CD8-positive, alpha-beta T cell (primary cell): ENCODE measurements at regions of chr1 and their contacts with region 1.

Region 1: GRCh38 chr1:113811888-113812660 is at the start of gene RSBN1:
- DNase-seq: peak; percentile 96 to 99 (median 98)
- ATAC-seq: peak; percentile 91
- H3K4me3 ChIP-seq: peak within 1 kb of the TSS; percentile 89 to 98
- H3K4me3 Mint-ChIP-seq: peak within 1 kb of the TSS; percentile 93
- H3K27ac ChIP-seq: peak within 1 kb of the TSS; percentile 90 to 94
- H3K27ac Mint-ChIP-seq: peak within 1 kb of the TSS; percentile 98
- H3K4me1 ChIP-seq: peaks cover 24% of the 10 kb centered on the region
- H3K4me1 Mint-ChIP-seq: peaks cover 37% of the 10 kb centered on the region
- H3K27me3 ChIP-seq: no peaks in the 10 kb centered on the region
- H3K27me3 Mint-ChIP-seq: no peaks in the 10 kb centered on the region
- CTCF ChIP-seq: no peak
- total RNA-seq, gene RSBN1: 36.8 to 37.6 TPM

Region 2: GRCh38 chr1:112955781-112956543 is 856.1 kb before region 1 on chr1 and contains the start of gene SLC16A1:
- CTCF ChIA-PET with region 1: no interaction called
- POLR2A ChIA-PET with region 1: no interaction called
- intact Hi-C with region 1: loop called in 1 of 2 experiments (anchors 10 kb)
- DNase-seq: peak; percentile 68 to 92 (median 86)
- ATAC-seq: peak; percentile 78
- H3K4me3 ChIP-seq: peak within 1 kb of the TSS; percentile 97 to 98
- H3K4me3 Mint-ChIP-seq: peak within 1 kb of the TSS; percentile 98
- H3K27ac ChIP-seq: peak within 1 kb of the TSS; percentile 79 to 87
- H3K27ac Mint-ChIP-seq: peak within 1 kb of the TSS; percentile 90
- H3K4me1 ChIP-seq: peaks cover 25% of the 10 kb centered on the region
- H3K4me1 Mint-ChIP-seq: peaks cover 63% of the 10 kb centered on the region
- H3K27me3 ChIP-seq: no peaks in the 10 kb centered on the region
- H3K27me3 Mint-ChIP-seq: no peaks in the 10 kb centered on the region
- CTCF ChIP-seq: no peak
- total RNA-seq, gene SLC16A1: 34.0 to 34.1 TPM

Region 3: DNA sequence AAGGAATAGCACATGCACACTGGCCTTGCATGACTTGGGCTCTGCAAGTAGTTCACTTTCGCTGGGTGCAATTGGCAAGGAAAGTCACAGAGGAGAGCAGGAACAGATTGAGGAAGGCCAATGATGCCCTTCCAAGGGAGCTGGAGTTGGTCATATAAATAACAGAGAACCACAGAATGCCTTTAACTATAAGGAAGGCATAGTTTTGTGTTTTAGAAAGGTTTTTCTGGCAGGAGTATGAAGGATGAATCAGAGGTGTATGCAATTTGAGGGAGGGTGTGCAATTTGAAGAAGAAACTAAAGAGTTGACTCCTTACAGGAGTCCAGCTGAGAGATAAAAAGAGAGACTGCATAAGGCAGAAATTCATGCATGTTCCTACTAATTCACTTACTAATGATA is 164.9 kb before region 1 on chr1:
- CTCF ChIA-PET with region 1: no interaction called
- POLR2A ChIA-PET with region 1: no interaction called
- intact Hi-C with region 1: no loop called
- DNase-seq: no peak
- ATAC-seq: no peak
- H3K4me3 ChIP-seq: no peak overlapping the region
- H3K4me3 Mint-ChIP-seq: no peak overlapping the region
- H3K27ac ChIP-seq: no peak overlapping the region
- H3K27ac Mint-ChIP-seq: no peak overlapping the region
- H3K4me1 ChIP-seq: no peaks in the 10 kb centered on the region
- H3K4me1 Mint-ChIP-seq: no peaks in the 10 kb centered on the region
- H3K27me3 ChIP-seq: no peaks in the 10 kb centered on the region
- H3K27me3 Mint-ChIP-seq: no peaks in the 10 kb centered on the region
- CTCF ChIP-seq: no peak

Region 4: DNA sequence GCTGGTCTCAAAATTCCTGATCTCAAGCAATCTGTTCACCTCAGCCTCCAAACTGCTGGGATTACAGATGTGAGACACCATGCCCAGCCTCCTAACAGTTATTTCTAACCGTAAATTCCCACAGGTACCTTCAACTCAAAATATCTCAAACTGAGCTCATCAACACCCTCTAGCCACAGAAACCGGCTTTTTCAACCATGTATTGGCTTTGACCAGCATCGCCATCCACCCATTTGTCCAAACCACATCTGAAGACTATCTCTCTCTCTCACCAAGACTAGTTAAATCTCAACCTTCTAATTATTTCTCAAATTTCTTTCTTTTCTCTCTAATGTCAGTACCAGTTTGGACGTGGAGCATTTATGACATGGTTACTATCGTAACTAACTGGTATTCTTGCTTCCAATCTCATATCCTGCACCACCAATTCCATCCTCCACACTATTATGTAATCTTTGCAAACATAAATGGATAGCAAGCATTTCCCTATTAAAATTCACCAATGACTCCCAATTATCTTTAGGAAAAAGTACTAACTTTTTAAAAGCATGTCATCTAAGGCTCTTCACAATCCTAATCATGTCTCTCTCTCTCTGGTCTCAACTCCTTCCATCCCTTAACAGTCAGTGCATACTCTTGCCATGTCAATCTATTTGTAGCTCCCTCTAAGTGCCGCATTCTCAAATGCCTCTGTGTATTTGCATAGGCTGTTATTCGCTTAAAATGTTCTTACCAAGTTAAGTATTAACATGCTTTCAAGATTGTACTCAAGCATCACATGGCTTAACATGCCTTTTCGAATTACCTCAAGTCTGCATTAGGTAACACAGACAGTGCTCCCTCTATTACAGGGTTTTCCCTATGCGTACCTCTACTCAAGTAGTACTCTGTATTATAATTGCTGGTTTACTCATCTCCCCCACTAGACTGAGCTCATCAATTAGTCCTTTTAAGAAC is 17.9 kb before region 1 on chr1:
- CTCF ChIA-PET with region 1: interaction called, 3 read pairs
- POLR2A ChIA-PET with region 1: interaction called, 5 read pairs
- intact Hi-C with region 1: loop called (anchors 2 kb)
- DNase-seq: no peak
- ATAC-seq: no peak
- H3K4me3 ChIP-seq: no peak overlapping the region
- H3K4me3 Mint-ChIP-seq: no peak overlapping the region
- H3K27ac ChIP-seq: peak overlapping the region in 1 of 2 experiments; percentile 9
- H3K27ac Mint-ChIP-seq: peak overlapping the region; percentile 81
- H3K4me1 ChIP-seq: peaks cover 27% of the 10 kb centered on the region
- H3K4me1 Mint-ChIP-seq: peaks cover 67% of the 10 kb centered on the region
- H3K27me3 ChIP-seq: no peaks in the 10 kb centered on the region
- H3K27me3 Mint-ChIP-seq: no peaks in the 10 kb centered on the region
- CTCF ChIP-seq: no peak

Region 5: GRCh38 chr1:113904674-113905434 is 92.8 kb after region 1 on chr1 and contains the starts of genes AP4B1 and DCLRE1B:
- CTCF ChIA-PET with region 1: interaction called, 3 read pairs
- POLR2A ChIA-PET with region 1: interaction called, 19 read pairs
- intact Hi-C with region 1: loop called (anchors 1 kb)
- DNase-seq: peak; percentile 93 to 100 (median 95)
- ATAC-seq: peak; percentile 92
- H3K4me3 ChIP-seq: peak within 1 kb of the TSS; percentile 83 to 85
- H3K4me3 Mint-ChIP-seq: peak within 1 kb of the TSS; percentile 99
- H3K27ac ChIP-seq: peak within 1 kb of the TSS; percentile 92 to 96
- H3K27ac Mint-ChIP-seq: peak within 1 kb of the TSS; percentile 100
- H3K4me1 ChIP-seq: peaks cover 34% of the 10 kb centered on the region
- H3K4me1 Mint-ChIP-seq: peaks cover 62% of the 10 kb centered on the region
- H3K27me3 ChIP-seq: no peaks in the 10 kb centered on the region
- H3K27me3 Mint-ChIP-seq: no peaks in the 10 kb centered on the region
- CTCF ChIP-seq: peak; percentile 65
- total RNA-seq, gene AP4B1: 63.7 to 67.3 TPM
- total RNA-seq, gene DCLRE1B: 8.1 to 9.1 TPM

Region 6: DNA sequence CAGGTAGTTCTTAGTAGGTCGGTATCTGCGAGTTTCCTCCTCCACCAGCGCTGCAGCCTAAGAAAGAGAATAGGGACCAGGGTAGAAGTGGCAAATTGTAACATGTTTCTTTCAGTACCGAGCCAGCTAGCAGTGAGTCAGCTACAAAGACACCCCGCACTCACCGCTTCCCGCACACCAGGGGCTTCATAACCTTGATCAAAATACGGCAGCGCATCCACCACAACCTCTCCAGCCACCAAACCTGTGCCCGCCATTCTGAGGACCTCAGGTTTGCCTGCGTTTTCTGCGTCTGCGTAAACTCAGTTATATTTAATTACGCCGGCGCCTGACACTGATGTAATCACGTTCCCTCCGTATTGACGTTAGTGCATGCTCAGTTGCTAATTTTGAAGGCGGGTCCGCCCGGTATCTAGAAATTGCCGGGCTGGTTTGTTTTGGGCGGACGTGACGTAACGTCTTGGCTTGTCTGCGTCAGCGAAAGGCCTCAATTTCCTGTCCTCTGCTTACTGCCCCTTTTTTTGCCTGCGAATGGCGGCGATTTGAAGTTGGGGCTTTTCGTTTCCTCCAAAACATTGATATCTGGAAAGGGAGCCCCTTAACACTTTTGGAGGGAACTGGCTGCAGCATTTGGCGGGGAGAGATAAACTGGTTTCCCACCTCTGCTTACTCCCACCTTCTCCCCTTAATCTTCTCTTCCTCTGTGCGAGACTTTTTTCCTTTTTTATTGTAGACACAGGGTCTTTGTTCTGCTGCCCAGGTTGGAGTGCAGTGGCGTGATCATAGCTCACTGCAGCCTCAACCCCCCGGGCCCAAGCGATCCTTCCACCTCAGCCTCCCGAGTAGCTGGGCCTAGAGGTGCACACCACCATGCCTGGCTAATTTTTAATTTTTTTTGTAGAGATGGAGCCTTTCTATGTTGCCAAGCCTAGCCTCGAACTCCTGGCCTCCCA is 769.5 kb after region 1 on chr1 and contains the start of gene BCAS2:
- CTCF ChIA-PET with region 1: no interaction called
- POLR2A ChIA-PET with region 1: interaction called, 4 read pairs
- intact Hi-C with region 1: loop called in 1 of 2 experiments (anchors 10 kb)
- DNase-seq: peak; percentile 90 to 99 (median 95)
- ATAC-seq: peak; percentile 95
- H3K4me3 ChIP-seq: peak within 1 kb of the TSS; percentile 56 to 72
- H3K4me3 Mint-ChIP-seq: peak within 1 kb of the TSS; percentile 96
- H3K27ac ChIP-seq: peak within 1 kb of the TSS; percentile 84 to 94
- H3K27ac Mint-ChIP-seq: peak within 1 kb of the TSS; percentile 99
- H3K4me1 ChIP-seq: peaks cover 22% of the 10 kb centered on the region
- H3K4me1 Mint-ChIP-seq: peaks cover 46% of the 10 kb centered on the region
- H3K27me3 ChIP-seq: no peaks in the 10 kb centered on the region
- H3K27me3 Mint-ChIP-seq: no peaks in the 10 kb centered on the region
- CTCF ChIP-seq: no peak
- total RNA-seq, gene BCAS2: 113 to 125 TPM

Region 7: GRCh38 chr1:115062542-115063011 is 1250.5 kb after region 1 on chr1:
- CTCF ChIA-PET with region 1: no interaction called
- POLR2A ChIA-PET with region 1: no interaction called
- intact Hi-C with region 1: loop called in 1 of 2 experiments (anchors 1 kb)
- DNase-seq: peak; percentile 91 to 99 (median 94)
- ATAC-seq: peak; percentile 89
- H3K4me3 ChIP-seq: peak overlapping the region in 1 of 2 experiments; percentile 17
- H3K4me3 Mint-ChIP-seq: peak overlapping the region; percentile 79
- H3K27ac ChIP-seq: peak overlapping the region; percentile 74 to 93
- H3K27ac Mint-ChIP-seq: peak overlapping the region; percentile 100
- H3K4me1 ChIP-seq: peaks cover 35% of the 10 kb centered on the region
- H3K4me1 Mint-ChIP-seq: peaks cover 43% of the 10 kb centered on the region
- H3K27me3 ChIP-seq: no peaks in the 10 kb centered on the region
- H3K27me3 Mint-ChIP-seq: no peaks in the 10 kb centered on the region
- CTCF ChIP-seq: no peak